ENCODE measurements at regions of chr7 and their contacts with region 1.

Region 1: GRCh38 chr7:23181684-23182553 is at the start of gene NUP42:
- DNase-seq: peak; percentile 85 to 97 (median 94)
- ATAC-seq: peak; percentile 95
- H3K4me3 Mint-ChIP-seq: peak within 1 kb of the TSS; percentile 93 to 100 (median 98)
- H3K27ac Mint-ChIP-seq: peak within 1 kb of the TSS; percentile 98 to 100 (median 100)
- H3K4me1 Mint-ChIP-seq: peaks cover 8 to 46% (median 37%) of the 10 kb centered on the region in 4 donors
- H3K27me3 Mint-ChIP-seq: peaks cover 0 to 3% (median 0%) of the 10 kb centered on the region in 5 donors
- polyA plus RNA-seq, gene NUP42: 28.2 to 31.1 (median 29.3) TPM

Region 2: DNA sequence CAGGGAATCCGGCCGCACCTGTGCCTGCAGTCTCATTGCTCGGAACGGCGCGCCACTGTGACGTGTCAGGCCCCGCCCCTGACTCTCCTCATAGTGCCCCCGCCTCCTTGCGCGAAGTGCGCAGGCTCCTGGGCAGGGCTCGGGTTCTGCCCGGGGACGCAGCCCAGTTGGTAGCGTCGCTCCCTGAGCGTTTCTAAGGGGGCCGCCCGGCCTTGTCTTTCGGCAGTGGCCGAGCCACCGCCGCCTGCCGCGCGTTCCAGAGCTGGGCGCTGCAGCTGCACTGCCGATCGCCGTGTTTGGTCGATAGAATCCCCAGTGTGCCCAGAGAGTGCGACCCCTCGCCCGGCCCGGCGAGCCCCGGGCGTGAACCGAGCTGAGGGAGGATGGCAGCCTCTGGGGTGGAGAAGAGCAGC is 76.3 kb before region 1 on chr7 and contains the start of gene KLHL7:
- POLR2A ChIA-PET with region 1: interaction called, 47 read pairs
- DNase-seq: peak; percentile 91 to 97 (median 95)
- ATAC-seq: peak; percentile 90 to 93
- H3K4me3 Mint-ChIP-seq: peak within 1 kb of the TSS; percentile 87 to 99 (median 96)
- H3K27ac Mint-ChIP-seq: peak within 1 kb of the TSS; percentile 86 to 99 (median 97)
- H3K4me1 Mint-ChIP-seq: peaks cover 22 to 47% (median 46%) of the 10 kb centered on the region in 4 donors
- H3K27me3 Mint-ChIP-seq: no peaks in the 10 kb centered on the region
- polyA plus RNA-seq, gene KLHL7: 19.7 to 29.7 (median 22.5) TPM

Region 3: GRCh38 chr7:23205909-23206767 is 24.2 kb after region 1 on chr7:
- POLR2A ChIA-PET with region 1: interaction called, 10 read pairs
- DNase-seq: peak in 3 of 10 donors; percentile 5 to 73 (median 16)
- ATAC-seq: peak; percentile 47 to 91
- H3K4me3 Mint-ChIP-seq: peak overlapping the region in 8 of 10 donors; percentile 11 to 82 (median 49)
- H3K27ac Mint-ChIP-seq: peak overlapping the region in 4 of 10 donors; percentile 85 to 95 (median 92)
- H3K4me1 Mint-ChIP-seq: peaks cover 0 to 11% (median 7%) of the 10 kb centered on the region in 4 donors
- H3K27me3 Mint-ChIP-seq: peaks cover 11 to 26% (median 20%) of the 10 kb centered on the region in 5 donors

Region 4: GRCh38 chr7:24069751-24070150 is 887.8 kb after region 1 on chr7:
- POLR2A ChIA-PET with region 1: no interaction called
- DNase-seq: no peak
- ATAC-seq: no peak
- H3K4me3 Mint-ChIP-seq: no peak overlapping the region
- H3K27ac Mint-ChIP-seq: peak overlapping the region in 1 of 10 donors; percentile 56
- H3K4me1 Mint-ChIP-seq: peaks cover 0 to under 1% (median under 1%) of the 10 kb centered on the region in 4 donors
- H3K27me3 Mint-ChIP-seq: peaks cover 0 to 12% (median 4%) of the 10 kb centered on the region in 5 donors

Measured in naive thymus-derived CD8-positive, alpha-beta T cell (primary cell).